Activated CD8-positive, alpha-beta memory T cell treated with anti-CD3 and anti-CD28 coated beads, Interleukin-2, amount 10 ng/mL, durations not matched to agents 7 days and 5 days (primary cell): ENCODE measurements at regions of chr3 and their contacts with region 1.

Region 1: DNA sequence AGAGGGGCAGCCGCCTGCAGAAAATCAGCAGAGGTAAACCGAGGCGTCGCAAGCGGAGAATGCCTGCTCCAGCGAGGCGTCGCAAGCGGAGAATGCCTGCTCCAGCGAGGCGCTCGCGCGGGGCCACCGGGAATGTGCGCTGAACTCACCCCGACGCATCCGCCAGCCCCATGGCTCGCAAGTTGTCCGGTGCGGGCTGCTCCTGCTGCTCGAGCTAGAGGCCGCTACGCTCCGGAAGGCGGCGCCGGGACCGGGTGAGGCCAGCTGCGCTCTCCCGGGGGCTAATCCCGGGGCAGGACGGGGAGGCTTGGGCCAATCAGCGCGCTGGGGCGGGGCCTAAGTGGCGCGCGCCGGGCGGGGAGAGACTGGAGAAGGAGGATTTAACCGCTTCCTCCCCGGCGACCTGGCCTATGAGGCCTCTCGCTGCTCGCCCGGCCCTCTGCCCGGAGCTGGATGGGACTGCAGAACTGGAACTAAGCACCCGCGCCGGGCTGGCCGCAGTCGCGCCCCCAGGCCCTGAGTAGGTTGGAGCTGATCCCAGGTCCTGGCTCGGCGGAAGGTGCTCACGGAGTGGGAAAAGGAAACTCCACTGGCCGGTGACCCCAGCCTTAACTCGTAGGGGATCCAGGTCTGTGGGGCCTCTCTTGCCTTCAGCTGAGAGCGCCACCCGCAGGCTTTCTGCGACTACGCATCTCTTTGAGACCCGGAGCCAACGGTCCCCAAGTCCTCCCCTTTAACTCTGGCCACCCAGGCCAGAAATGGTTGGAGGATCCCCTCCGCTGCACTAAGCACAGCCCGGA is at the start of gene SLC26A6:
- DNase-seq: peak; percentile 96
- ATAC-seq: peak; percentile 96
- H3K4me3 Mint-ChIP-seq: peak within 1 kb of the TSS; percentile 85
- H3K27ac Mint-ChIP-seq: peak within 1 kb of the TSS; percentile 88
- H3K4me1 Mint-ChIP-seq: peaks cover 20% of the 10 kb centered on the region
- H3K27me3 Mint-ChIP-seq: no peaks in the 10 kb centered on the region
- total RNA-seq, gene SLC26A6: 44.9 to 59.0 TPM

Region 2: DNA sequence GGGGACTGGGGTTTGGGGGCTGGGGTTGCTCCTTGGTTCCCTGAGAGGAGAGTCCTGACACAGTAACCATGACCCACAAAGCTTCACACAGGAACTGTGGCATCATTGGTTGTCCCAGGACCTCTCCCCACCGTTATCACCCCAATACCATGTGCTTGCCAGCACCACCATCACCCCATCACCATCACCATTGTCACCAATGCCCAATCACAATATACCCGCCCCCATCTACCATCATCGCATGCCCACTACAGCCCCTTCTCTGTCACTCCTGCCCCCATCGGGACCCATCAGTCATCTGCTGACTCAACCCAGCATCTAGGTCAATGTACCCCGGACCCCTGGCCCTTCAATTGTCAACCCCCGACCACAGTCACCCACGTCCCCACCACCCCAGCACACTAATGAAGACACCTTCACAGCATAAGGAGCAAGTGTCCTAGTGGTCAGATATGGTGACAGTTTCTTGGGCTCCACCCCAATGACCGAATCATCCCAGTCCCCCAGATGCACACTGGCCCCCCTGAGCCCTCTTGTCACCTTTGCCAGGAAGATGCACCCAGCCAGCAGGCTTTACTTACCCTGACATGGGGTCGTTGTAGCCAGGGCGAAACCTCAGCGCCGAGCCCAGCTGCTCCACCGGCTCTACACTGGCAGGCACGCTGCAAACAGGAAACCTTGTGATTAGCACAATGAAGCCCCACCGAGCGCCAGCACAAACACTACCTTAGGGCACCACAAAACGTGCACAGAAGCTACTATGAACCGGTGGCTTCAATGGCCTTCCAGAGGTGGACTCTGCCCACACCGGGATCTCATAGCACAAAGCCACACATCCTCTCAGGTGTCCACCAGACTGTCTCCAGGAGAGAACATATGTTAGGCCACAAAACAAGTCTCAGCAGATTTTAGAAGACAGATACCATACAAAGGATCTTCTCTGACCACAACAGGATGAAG is 156.5 kb before region 1 on chr3:
- CTCF ChIA-PET with region 1: no interaction called
- DNase-seq: peak; percentile 86
- ATAC-seq: peak; percentile 73
- H3K4me3 Mint-ChIP-seq: peak overlapping the region; percentile 84
- H3K27ac Mint-ChIP-seq: peak overlapping the region; percentile 95
- H3K4me1 Mint-ChIP-seq: peaks cover 49% of the 10 kb centered on the region
- H3K27me3 Mint-ChIP-seq: no peaks in the 10 kb centered on the region

Region 3: GRCh38 chr3:48556793-48557626 is 78.4 kb before region 1 on chr3 and contains the start of gene PFKFB4:
- CTCF ChIA-PET with region 1: interaction called, 40 read pairs
- DNase-seq: peak; percentile 100
- ATAC-seq: peak; percentile 89
- H3K4me3 Mint-ChIP-seq: peak within 1 kb of the TSS; percentile 84
- H3K27ac Mint-ChIP-seq: peak within 1 kb of the TSS; percentile 86
- H3K4me1 Mint-ChIP-seq: peaks cover 47% of the 10 kb centered on the region
- H3K27me3 Mint-ChIP-seq: no peaks in the 10 kb centered on the region
- total RNA-seq, gene PFKFB4: 12.2 to 26.9 TPM

Region 4: DNA sequence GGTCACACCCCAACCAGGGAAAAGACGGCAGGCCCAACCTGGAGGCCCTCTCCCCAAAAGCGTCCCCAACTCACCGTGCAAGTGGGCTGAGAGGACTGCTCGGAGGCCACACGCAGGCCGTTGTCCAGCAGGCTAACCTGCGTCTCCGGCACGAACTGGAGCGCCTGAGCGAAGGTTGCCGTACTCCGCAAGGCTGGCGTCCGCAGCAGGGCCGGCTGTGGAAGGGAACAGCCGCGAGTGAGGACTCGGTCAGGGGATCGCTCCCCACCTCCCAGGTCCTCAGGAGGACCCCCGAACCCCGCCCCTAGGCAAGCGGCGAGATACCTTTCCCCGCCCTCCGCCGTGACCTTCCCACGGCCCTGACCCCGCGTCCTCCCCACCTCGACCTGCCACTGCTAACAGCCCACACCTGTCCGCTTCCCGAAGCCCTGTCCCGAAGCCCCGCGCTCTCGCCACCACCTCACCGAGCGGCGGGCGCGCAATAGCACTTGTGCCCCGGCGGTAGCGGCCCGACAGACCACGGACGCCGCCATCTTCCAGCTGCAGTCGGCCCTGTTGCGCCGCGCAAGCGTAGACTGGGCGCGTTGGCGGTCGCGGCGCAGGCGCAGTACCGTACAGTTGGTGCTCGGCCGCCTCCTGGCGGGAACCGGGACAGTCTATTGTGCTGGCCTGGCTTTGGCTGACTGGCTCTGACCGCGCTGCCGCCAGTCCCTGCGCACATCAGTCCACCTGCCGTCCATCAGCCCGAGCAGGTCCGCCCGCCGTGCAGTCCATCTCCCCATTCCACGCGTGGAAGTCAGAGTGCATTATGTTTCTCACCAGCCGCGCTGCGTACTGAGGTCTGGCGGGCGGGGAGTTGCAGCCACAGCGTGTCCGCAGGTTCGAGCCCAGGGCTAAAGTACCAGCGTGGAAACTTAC is 26.1 kb before region 1 on chr3 and contains the start of gene UQCRC1:
- CTCF ChIA-PET with region 1: interaction called, 35 read pairs
- DNase-seq: peak; percentile 95
- ATAC-seq: peak; percentile 100
- H3K4me3 Mint-ChIP-seq: peak within 1 kb of the TSS; percentile 99
- H3K27ac Mint-ChIP-seq: peak within 1 kb of the TSS; percentile 98
- H3K4me1 Mint-ChIP-seq: peaks cover 29% of the 10 kb centered on the region
- H3K27me3 Mint-ChIP-seq: no peaks in the 10 kb centered on the region
- total RNA-seq, gene UQCRC1: 201 to 220 TPM

Region 5: GRCh38 chr3:48623851-48624547 is 11.4 kb before region 1 on chr3:
- CTCF ChIA-PET with region 1: interaction called, 21 read pairs
- DNase-seq: no peak
- ATAC-seq: no peak
- H3K4me3 Mint-ChIP-seq: no peak overlapping the region
- H3K27ac Mint-ChIP-seq: peak overlapping the region; percentile 1
- H3K4me1 Mint-ChIP-seq: peaks cover 5% of the 10 kb centered on the region
- H3K27me3 Mint-ChIP-seq: no peaks in the 10 kb centered on the region

Region 6: GRCh38 chr3:48656061-48656840 is 20.8 kb after region 1 on chr3:
- CTCF ChIA-PET with region 1: interaction called, 19 read pairs
- DNase-seq: peak; percentile 92
- ATAC-seq: peak; percentile 82
- H3K4me3 Mint-ChIP-seq: peak overlapping the region; percentile 75
- H3K27ac Mint-ChIP-seq: peak overlapping the region; percentile 90
- H3K4me1 Mint-ChIP-seq: peaks cover 31% of the 10 kb centered on the region
- H3K27me3 Mint-ChIP-seq: no peaks in the 10 kb centered on the region

Region 7: GRCh38 chr3:48663415-48664312 is 28.2 kb after region 1 on chr3:
- CTCF ChIA-PET with region 1: interaction called, 19 read pairs
- DNase-seq: peak; percentile 98
- ATAC-seq: peak; percentile 92
- H3K4me3 Mint-ChIP-seq: peak overlapping the region; percentile 89
- H3K27ac Mint-ChIP-seq: peak overlapping the region; percentile 93
- H3K4me1 Mint-ChIP-seq: peaks cover 19% of the 10 kb centered on the region
- H3K27me3 Mint-ChIP-seq: peaks cover 14% of the 10 kb centered on the region